Heart left ventricle (tissue), 16 donors: ENCODE measurements at regions of chr12 and their contacts with region 1.

Region 1: DNA sequence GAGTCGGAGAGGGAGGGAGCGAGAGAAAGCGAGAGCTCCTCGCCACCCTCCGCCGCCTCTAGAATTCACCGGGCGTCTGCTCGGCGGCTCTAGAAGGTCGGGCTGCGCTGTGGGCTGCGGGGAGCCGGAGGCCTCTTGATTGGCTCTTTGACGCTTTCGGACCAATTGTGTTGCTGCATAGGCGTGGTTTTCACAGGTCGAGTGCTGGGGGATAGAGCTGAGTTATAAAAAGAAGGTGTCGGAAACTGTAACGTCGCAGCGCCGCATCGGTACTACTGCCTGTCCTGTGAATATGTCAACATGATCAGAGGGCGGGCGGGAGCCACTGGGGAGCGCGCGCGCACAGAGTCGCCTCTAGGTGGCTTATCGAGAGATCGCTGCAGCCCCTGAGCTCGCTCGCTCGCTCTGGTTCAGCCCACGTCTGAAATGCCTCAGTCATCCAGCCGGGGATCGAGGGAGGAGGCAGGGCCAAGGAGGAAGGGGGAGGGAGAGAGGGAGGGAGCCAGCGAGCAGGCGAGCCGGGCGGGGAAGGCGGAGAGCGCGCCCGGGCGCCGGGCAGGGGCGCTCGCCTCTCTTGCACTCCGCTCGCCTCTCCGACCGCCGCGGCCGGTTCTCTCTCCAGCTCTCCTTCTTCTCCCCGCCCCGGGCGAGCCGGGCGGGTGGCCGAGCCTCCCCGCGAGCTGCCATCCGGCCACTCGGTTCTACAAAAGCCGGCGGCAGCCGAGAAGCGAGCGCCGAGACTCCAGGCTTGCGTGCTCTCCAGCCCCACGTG is at the start of gene TBX3:
- DNase-seq: peak; percentile 91 to 96 (median 94)
- ATAC-seq: peak; percentile 93 to 95 (median 94)
- H3K4me3 ChIP-seq: peak within 1 kb of the TSS; percentile 56 to 89 (median 74)
- H3K27ac ChIP-seq: peak within 1 kb of the TSS; percentile 81 to 98 (median 90)
- H3K4me1 ChIP-seq: peaks cover 0 to 21% (median 10%) of the 10 kb centered on the region in 12 donors
- H3K27me3 ChIP-seq: peaks cover 11 to 74% (median 40%) of the 10 kb centered on the region in 9 donors
- CTCF ChIP-seq: peak; percentile 15 to 70 (median 51)
- POLR2A ChIP-seq: peak; percentile 55 to 98
- total RNA-seq, gene TBX3: 10.3 to 31.3 (median 16.2) TPM

Region 2: GRCh38 chr12:114395755-114396152 is 288.5 kb before region 1 on chr12:
- intact Hi-C with region 1: no loop called
- DNase-seq: no peak
- ATAC-seq: peak in 1 of 4 donors; percentile 3
- H3K4me3 ChIP-seq: peak overlapping the region in 8 of 12 donors; percentile 5 to 41 (median 24)
- H3K27ac ChIP-seq: peak overlapping the region in 6 of 12 donors; percentile 14 to 62 (median 44)
- H3K4me1 ChIP-seq: peaks cover 0 to 60% (median 14%) of the 10 kb centered on the region in 12 donors
- H3K27me3 ChIP-seq: peaks cover 0 to 74% (median 6%) of the 10 kb centered on the region in 9 donors
- CTCF ChIP-seq: no peak
- POLR2A ChIP-seq: no peak

Region 3: GRCh38 chr12:114611145-114612018 is 72.9 kb before region 1 on chr12:
- intact Hi-C with region 1: no loop called
- DNase-seq: no peak
- ATAC-seq: no peak
- H3K4me3 ChIP-seq: no peak overlapping the region
- H3K27ac ChIP-seq: no peak overlapping the region
- H3K4me1 ChIP-seq: no peaks in the 10 kb centered on the region
- H3K27me3 ChIP-seq: peaks cover 0 to 12% (median 2%) of the 10 kb centered on the region in 9 donors
- CTCF ChIP-seq: no peak
- POLR2A ChIP-seq: no peak

Region 4: DNA sequence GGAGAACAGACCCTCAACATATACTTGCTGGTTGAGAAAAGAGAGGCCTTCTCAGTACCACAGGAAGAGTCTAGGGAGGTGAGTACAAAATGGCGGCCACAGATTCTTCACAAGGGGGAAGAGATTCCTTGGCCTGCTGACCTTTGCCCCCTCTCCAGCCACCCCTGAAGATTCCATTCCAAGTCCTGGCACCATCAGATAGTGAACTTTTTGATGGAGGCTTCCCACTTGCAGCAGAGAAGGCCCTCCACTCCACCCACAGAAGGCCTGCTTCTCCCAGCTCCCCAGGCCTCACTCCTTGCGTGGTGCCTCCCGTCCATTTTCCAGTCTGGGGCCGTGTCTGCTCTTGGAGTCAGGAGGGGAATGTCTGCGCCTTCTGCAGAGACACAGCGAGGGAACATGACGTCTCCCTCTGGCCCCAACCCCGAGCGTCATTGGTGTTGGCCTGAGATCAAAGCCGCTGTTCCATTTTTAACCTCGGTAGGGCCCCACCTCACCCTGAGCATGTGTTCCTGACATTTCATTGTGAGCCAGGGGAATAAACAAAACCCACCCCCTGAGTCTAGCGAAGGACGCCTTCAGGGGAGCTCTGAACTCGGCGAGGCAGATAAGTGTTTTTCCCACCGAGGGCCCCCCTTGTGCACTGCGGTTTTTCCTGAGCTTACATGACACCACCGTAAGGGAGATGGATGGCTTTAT is 268.4 kb after region 1 on chr12:
- intact Hi-C with region 1: loop called in 2 of 10 experiments (anchors 10 kb)
- DNase-seq: peak; percentile 72 to 87 (median 81)
- ATAC-seq: peak; percentile 97 to 99 (median 98)
- H3K4me3 ChIP-seq: no peak overlapping the region
- H3K27ac ChIP-seq: peak overlapping the region in 9 of 12 donors; percentile 34 to 75 (median 50)
- H3K4me1 ChIP-seq: peaks cover 0 to 14% (median 9%) of the 10 kb centered on the region in 12 donors
- H3K27me3 ChIP-seq: no peaks in the 10 kb centered on the region
- CTCF ChIP-seq: no peak
- POLR2A ChIP-seq: peak in 1 of 2 donors; percentile 40

Region 5: DNA sequence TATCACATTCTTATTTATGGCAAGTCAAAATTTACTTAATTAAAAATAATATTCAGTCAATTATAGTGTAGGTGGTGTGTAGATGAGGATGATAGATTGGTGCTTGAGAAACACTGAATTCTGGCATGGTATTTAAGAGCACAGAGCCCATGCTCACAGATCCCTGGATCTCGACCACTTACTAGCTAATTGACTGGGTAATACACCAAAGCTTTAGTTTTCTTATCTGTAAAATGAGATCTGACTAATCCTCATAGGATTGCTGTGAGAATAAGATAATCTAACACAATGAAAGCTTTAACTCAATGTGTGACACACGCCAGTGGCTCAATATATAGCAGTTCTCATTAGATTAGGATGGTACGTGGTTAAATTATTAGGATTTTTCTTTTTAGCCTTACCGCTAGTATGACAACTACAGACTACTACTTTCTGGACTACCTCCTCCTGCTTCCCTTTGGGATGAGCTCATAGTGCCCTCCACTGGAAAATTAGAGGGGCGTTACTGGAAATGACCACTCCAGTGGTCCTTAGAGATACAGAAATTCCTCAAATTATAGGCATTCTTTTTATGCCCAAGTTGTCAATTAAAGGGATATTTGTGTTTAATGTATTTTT is 482.5 kb after region 1 on chr12:
- intact Hi-C with region 1: loop called in 3 of 10 experiments (anchors 5 to 10 kb)
- DNase-seq: peak in 1 of 5 donors; percentile 11
- ATAC-seq: peak in 1 of 4 donors; percentile 50
- H3K4me3 ChIP-seq: no peak overlapping the region
- H3K27ac ChIP-seq: no peak overlapping the region
- H3K4me1 ChIP-seq: no peaks in the 10 kb centered on the region
- H3K27me3 ChIP-seq: no peaks in the 10 kb centered on the region
- CTCF ChIP-seq: peak in 9 of 12 donors; percentile 14 to 60 (median 38)
- POLR2A ChIP-seq: no peak

Region 6: GRCh38 chr12:115204957-115205754 is 520.9 kb after region 1 on chr12:
- intact Hi-C with region 1: no loop called
- DNase-seq: no peak
- ATAC-seq: no peak
- H3K4me3 ChIP-seq: no peak overlapping the region
- H3K27ac ChIP-seq: no peak overlapping the region
- H3K4me1 ChIP-seq: no peaks in the 10 kb centered on the region
- H3K27me3 ChIP-seq: no peaks in the 10 kb centered on the region
- CTCF ChIP-seq: no peak
- POLR2A ChIP-seq: no peak

Region 7: GRCh38 chr12:115451780-115452736 is 767.8 kb after region 1 on chr12:
- intact Hi-C with region 1: loop called in 1 of 10 experiments (anchors 5 kb)
- DNase-seq: peak; percentile 61 to 71 (median 70)
- ATAC-seq: peak in 3 of 4 donors; percentile 65 to 78 (median 73)
- H3K4me3 ChIP-seq: peak overlapping the region in 10 of 12 donors; percentile 21 to 54 (median 38)
- H3K27ac ChIP-seq: peak overlapping the region in 9 of 12 donors; percentile 16 to 85 (median 66)
- H3K4me1 ChIP-seq: peaks cover 0 to 30% (median 8%) of the 10 kb centered on the region in 12 donors
- H3K27me3 ChIP-seq: peaks cover 0 to 13% (median 0%) of the 10 kb centered on the region in 9 donors
- CTCF ChIP-seq: no peak
- POLR2A ChIP-seq: no peak

Region 8: DNA sequence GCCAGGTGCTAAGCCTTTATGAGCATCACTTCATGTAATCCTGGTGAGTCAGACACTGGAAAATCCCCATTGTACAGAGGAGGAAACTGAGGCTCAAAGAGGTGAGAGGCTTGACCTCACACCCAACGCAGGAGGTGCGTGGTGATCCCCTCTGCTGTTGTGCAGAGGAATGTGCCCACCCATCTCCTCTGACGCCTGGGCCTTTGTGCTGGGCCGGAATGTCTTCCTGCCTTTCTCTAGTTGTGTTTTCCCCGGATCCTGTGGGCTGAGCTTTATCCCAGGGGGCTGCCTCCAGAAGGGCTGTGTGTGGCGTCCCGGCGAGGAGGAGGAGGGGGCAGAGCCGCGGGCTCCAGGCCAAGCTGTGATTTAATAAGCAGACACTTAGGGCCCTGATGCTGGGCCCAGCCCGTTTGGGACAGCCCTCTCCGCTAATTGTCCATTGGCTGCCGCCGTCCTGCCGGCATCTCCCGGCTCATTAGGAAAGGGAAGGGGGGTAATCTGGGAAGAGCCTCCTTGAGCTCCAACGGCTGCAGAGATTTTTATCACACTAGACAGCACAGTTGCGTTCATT is 939.6 kb after region 1 on chr12:
- intact Hi-C with region 1: loop called in 1 of 10 experiments (anchors 5 kb)
- DNase-seq: peak; percentile 81 to 88 (median 86)
- ATAC-seq: peak; percentile 87 to 97 (median 88)
- H3K4me3 ChIP-seq: no peak overlapping the region
- H3K27ac ChIP-seq: peak overlapping the region in 7 of 12 donors; percentile 24 to 70 (median 56)
- H3K4me1 ChIP-seq: peaks cover 0 to 11% (median 0%) of the 10 kb centered on the region in 12 donors
- H3K27me3 ChIP-seq: peaks cover 0 to 5% (median 0%) of the 10 kb centered on the region in 9 donors
- CTCF ChIP-seq: no peak
- POLR2A ChIP-seq: no peak